ENCODE measurements at regions of chr20 and their contacts with region 1.

Region 1: DNA sequence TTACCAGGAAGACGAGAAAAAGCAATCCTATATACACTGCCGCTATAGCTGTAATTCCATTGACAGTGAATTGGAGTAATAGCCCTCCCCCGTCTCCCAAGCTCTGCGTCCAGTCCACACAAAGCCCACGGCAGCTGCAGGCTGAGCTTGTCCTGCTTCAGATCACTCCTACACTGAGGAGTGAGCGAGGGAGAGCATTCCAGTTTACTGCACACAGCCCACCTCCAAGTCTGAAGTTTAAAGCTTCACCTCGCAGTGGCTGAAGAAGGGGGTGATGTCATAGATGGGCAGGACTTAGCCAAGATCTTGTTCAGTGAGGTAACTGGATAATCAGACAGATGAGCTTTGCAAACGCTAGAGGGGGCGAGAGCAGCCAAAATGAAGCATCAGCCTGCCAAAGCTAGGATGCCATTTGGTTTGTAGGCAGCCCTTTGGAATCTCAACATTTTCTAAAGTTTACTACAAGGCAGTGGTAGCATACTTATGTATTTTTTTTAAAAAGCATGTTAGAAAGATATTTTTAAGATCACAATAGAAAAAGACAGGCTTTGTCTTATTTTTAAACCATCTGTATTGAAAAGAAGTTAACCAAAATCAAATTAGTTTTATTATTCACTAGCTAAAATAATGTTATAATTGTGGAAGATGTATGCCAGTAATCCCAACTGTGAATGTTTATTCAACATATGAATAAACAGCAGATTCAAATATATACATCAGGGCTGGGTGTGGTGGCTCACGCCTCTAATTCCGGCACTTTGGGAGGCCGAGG is at the start of gene FLRT3:
- DNase-seq: peak; percentile 96
- H3K4me3 ChIP-seq: peak within 1 kb of the TSS; percentile 62 to 93 (median 91)
- H3K27ac ChIP-seq: peak within 1 kb of the TSS; percentile 95
- H3K4me1 ChIP-seq: peaks cover 14% of the 10 kb centered on the region
- H3K27me3 ChIP-seq: no peaks in the 10 kb centered on the region
- CTCF ChIP-seq: peak; percentile 74 to 97 (median 89)
- polyA plus RNA-seq, gene FLRT3: 69.7 to 123 TPM (median 91.7 TPM) in 3 replicates

Region 2: GRCh38 chr20:14304472-14304871 is 33.1 kb before region 1 on chr20:
- dilution Hi-C with region 1: no loop called
- DNase-seq: no peak
- H3K4me3 ChIP-seq: no peak overlapping the region
- H3K27ac ChIP-seq: no peak overlapping the region
- H3K4me1 ChIP-seq: no peaks in the 10 kb centered on the region
- H3K27me3 ChIP-seq: no peaks in the 10 kb centered on the region
- CTCF ChIP-seq: no peak

Region 3: GRCh38 chr20:14700639-14700960 is 363.0 kb after region 1 on chr20:
- dilution Hi-C with region 1: loop called (anchors 25 kb)
- DNase-seq: no peak
- H3K4me3 ChIP-seq: no peak overlapping the region
- H3K27ac ChIP-seq: peak overlapping the region; percentile 36
- H3K4me1 ChIP-seq: peaks cover 11% of the 10 kb centered on the region
- H3K27me3 ChIP-seq: no peaks in the 10 kb centered on the region
- CTCF ChIP-seq: no peak